Right ventricle myocardium inferior (tissue), 1 donor: ENCODE measurements at regions of chr12 and their contacts with region 1.

Region 1: GRCh38 chr12:3342056-3342455 is 148.9 kb upstream of the PRMT8 start:
- DNase-seq: no peak
- ATAC-seq: peak; percentile 81

Region 2: GRCh38 chr12:3554371-3555115 is 212.5 kb after region 1 on chr12:
- intact Hi-C with region 1: no loop called
- DNase-seq: no peak
- ATAC-seq: no peak

Region 3: DNA sequence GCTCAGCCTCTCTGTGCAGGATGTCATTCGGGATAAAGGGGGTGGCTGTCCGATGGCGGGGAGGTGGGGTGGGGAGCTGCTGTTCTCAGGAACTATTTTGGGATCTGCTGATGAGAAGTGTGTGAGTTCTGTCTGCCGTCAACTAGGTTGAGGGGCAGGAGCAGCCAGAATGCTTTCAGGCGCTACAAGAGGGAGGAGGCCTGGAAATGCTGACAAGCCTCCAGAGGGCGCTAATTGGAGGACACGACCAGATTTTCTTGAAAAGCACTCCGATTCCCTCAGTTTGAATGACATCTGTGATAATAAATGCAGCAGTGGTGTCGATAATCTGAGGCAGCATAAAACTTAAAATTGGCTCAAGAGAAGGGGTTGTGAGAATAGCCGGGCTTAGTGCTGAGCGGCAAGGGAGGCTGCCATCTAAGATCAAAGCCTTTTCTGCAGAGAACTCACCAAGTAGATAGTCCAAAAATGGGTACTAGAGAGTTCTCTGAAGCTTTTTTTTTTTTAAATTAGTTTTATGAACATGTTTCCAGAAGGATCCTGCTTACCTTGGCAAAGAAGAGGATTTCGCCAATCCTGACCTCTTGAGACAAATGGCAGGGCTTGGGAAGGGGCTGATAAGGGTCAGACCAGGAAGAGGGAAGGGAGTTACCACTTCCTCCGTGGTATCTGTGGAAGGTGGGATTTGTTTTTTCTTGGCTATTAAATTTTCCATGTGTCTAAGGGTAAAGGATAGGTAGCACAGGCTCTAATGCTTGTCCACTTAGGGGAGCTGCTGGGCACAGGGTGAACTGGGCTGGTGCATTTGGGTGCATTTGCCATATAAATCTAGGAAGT is 316.5 kb after region 1 on chr12:
- intact Hi-C with region 1: loop called (anchors 10 kb)
- DNase-seq: no peak
- ATAC-seq: peak; percentile 29